GM13976 (cell line): ENCODE measurements at regions of chr12 and their contacts with region 1.

Region 1: DNA sequence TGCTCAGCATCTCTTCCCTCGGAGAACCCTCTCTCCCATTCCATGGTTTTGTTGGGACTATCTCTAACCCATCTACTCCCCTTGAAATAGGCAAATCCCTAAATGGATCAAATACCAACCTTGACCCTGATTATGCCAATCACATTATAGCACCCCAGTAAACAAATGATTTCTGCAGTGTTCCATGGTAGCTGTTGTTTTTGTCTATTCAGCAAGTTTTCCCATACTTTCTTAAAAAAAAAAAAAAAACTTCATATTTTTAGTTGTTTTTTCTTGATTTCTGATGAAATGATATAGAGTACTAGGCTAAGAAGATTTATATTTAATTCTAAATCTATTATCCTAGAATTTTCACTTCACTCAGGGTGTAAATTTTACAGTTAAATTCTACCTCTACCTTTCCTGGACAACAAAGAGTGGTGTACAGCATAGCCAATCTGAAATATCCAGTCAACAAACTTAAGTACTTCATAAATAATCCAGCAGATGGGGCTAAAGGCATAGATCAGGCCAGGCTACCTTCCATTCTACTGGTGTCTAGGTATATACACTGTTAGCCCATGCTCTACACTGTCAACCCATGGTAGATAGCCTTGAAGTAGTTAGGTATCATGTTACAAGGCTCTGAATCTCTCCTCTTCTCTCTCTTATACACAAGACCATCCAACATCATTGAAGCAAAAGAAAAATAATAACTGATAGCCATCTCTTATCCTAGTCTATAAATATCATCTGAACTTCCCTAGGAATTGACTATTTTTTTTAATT is 82.2 kb downstream of the PLEKHG7 start:
- DNase-seq: peak; percentile 54
- CTCF ChIP-seq: peak; percentile 45

Region 2: GRCh38 chr12:92958851-92959250 is 173.9 kb after region 1 on chr12:
- in situ Hi-C with region 1: no loop called
- DNase-seq: no peak
- CTCF ChIP-seq: no peak

Region 3: DNA sequence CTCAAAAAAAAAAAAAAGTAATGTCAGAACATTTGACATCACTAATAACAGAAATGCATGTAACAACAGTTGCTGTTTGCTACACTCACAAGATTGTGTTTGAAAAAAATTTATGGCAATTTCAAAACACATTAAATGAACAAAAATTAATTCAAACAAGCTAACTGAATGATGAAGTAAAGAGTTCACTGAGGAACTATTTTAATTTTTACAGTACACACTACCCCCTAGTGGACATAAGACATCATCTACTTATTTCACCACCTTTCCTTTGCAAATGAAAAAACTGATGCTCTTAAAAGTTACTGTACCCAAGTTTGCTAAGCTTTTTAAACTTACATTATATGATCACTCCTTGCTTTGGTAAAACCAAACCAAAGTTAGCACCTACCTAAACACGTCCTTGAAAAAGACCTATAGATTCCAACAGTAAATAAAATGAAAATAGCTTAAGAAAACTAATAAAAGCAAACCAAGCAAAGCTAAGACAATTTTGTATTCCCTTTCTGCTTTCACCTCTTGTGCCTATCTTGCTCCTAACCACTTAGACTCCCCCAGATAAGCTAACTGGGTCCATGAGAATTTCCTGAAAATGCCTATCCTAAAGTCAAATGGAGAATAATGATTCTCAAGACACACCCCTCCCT is 634.5 kb after region 1 on chr12:
- in situ Hi-C with region 1: loop called (anchors 25 kb)
- DNase-seq: no peak
- CTCF ChIP-seq: peak; percentile 35